ENCODE measurements at regions of chr5 and their contacts with region 1.

Region 1: GRCh38 chr5:65481635-65482295 is at the start of gene ADAMTS6:
- DNase-seq: peak; percentile 94
- H3K4me3 ChIP-seq: peak within 1 kb of the TSS; percentile 64 to 98 (median 96)
- H3K27ac ChIP-seq: peak within 1 kb of the TSS; percentile 87
- H3K4me1 ChIP-seq: peaks cover 36% of the 10 kb centered on the region
- H3K27me3 ChIP-seq: no peaks in the 10 kb centered on the region
- CTCF ChIP-seq: no peak
- POLR2A ChIP-seq: peak; percentile 55
- total RNA-seq, gene ADAMTS6: 43.4 and 57.4 TPM in 2 replicates

Region 2: GRCh38 chr5:64634997-64635686 is 846.6 kb before region 1 on chr5:
- CTCF ChIA-PET with region 1: interaction called, 9 read pairs
- POLR2A ChIA-PET with region 1: no interaction called
- dilution Hi-C with region 1: no loop called
- intact Hi-C with region 1: loop called (anchors 1 kb)
- DNase-seq: peak; percentile 52
- H3K4me3 ChIP-seq: no peak overlapping the region
- H3K27ac ChIP-seq: no peak overlapping the region
- H3K4me1 ChIP-seq: peaks cover 4% of the 10 kb centered on the region
- H3K27me3 ChIP-seq: peaks cover 26 to 37% of the 10 kb centered on the region in 2 experiments
- CTCF ChIP-seq: peak; percentile 31 to 41
- POLR2A ChIP-seq: no peak

Region 3: DNA sequence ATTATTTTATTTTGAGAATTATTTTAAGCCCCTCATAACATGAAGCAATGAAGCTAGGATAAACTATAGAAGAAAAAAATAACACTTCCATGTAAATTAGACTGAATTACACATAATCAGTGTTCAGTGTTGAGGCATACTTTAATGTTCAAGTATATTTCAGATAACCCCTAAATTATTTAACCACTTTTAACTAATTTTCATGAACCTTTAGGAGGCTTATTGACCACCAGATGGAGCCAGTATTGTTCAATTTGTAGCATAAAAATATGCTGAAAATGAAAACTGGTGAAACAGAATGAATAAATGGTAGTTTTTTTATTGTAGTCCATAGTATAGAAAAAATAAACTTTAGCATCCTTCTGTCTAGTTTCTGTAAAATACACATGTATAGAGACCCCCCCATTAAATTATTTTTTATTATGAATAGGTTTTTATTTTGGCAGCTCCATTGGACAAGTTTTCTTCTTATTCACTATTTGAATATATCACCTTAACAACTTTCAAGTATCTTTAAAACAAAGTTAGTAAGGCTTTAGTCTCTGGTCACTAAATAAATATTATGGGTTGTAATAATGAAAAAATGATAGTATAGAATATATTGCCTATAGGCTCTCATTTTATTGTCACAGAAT is 522.9 kb before region 1 on chr5:
- CTCF ChIA-PET with region 1: interaction called, 135 read pairs
- POLR2A ChIA-PET with region 1: no interaction called
- dilution Hi-C with region 1: no loop called
- intact Hi-C with region 1: loop called (anchors 1 kb)
- DNase-seq: peak; percentile 43
- H3K4me3 ChIP-seq: no peak overlapping the region
- H3K27ac ChIP-seq: no peak overlapping the region
- H3K4me1 ChIP-seq: no peaks in the 10 kb centered on the region
- H3K27me3 ChIP-seq: no peaks in the 10 kb centered on the region
- CTCF ChIP-seq: peak; percentile 27 to 39
- POLR2A ChIP-seq: no peak

Region 4: GRCh38 chr5:65035211-65036206 is 446.3 kb before region 1 on chr5:
- CTCF ChIA-PET with region 1: interaction called, 8 read pairs
- POLR2A ChIA-PET with region 1: no interaction called
- dilution Hi-C with region 1: no loop called
- intact Hi-C with region 1: loop called (anchors 1 kb)
- DNase-seq: peak; percentile 95
- H3K4me3 ChIP-seq: peak overlapping the region; percentile 60 to 69 (median 63)
- H3K27ac ChIP-seq: peak overlapping the region; percentile 97
- H3K4me1 ChIP-seq: peaks cover 23% of the 10 kb centered on the region
- H3K27me3 ChIP-seq: no peaks in the 10 kb centered on the region
- CTCF ChIP-seq: no peak
- POLR2A ChIP-seq: peak; percentile 89

Region 5: GRCh38 chr5:65142511-65143011 is 339.2 kb before region 1 on chr5:
- CTCF ChIA-PET with region 1: interaction called, 14 read pairs
- POLR2A ChIA-PET with region 1: no interaction called
- dilution Hi-C with region 1: no loop called
- intact Hi-C with region 1: loop called (anchors 1 kb)
- DNase-seq: peak; percentile 68
- H3K4me3 ChIP-seq: peak overlapping the region in 1 of 3 experiments; percentile 34
- H3K27ac ChIP-seq: peak overlapping the region; percentile 80
- H3K4me1 ChIP-seq: peaks cover 41% of the 10 kb centered on the region
- H3K27me3 ChIP-seq: no peaks in the 10 kb centered on the region
- CTCF ChIP-seq: no peak
- POLR2A ChIP-seq: no peak

Region 6: DNA sequence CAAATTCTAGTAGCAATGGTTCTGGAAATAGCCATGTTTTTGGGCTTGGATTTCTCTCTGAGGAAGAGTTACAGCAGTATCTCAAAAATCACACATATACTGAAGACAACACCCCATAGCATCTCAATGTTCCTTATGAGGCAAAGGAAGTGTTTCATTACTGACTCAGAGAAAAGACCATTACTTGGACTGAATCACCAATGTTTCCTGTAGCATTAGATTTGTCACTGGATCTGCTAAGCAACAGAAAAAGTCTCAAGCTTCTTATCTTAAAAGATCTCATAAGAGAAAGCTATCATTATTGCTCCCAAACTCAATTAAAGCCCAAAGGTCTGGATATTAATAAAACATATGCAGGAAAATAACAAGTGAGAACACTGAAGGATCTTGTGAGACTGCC is 272.4 kb before region 1 on chr5:
- CTCF ChIA-PET with region 1: interaction called, 16 read pairs
- POLR2A ChIA-PET with region 1: no interaction called
- dilution Hi-C with region 1: no loop called
- intact Hi-C with region 1: loop called (anchors 1 kb)
- DNase-seq: peak; percentile 90
- H3K4me3 ChIP-seq: peak overlapping the region in 1 of 3 experiments; percentile 2
- H3K27ac ChIP-seq: peak overlapping the region; percentile 97
- H3K4me1 ChIP-seq: peaks cover 35% of the 10 kb centered on the region
- H3K27me3 ChIP-seq: no peaks in the 10 kb centered on the region
- CTCF ChIP-seq: no peak
- POLR2A ChIP-seq: no peak